ENCODE measurements at regions of chr3 and their contacts with region 1.

Region 1: GRCh38 chr3:73215281-73215680 is 153.8 kb downstream of the EBLN2 start:
- DNase-seq: no peak
- ATAC-seq: no peak
- H3K4me3 ChIP-seq: no peak overlapping the region
- H3K27ac ChIP-seq: no peak overlapping the region
- H3K4me1 ChIP-seq: peaks cover 0 to 5% (median 0%) of the 10 kb centered on the region in 9 donors
- H3K27me3 ChIP-seq: no peaks in the 10 kb centered on the region
- CTCF ChIP-seq: no peak

Region 2: DNA sequence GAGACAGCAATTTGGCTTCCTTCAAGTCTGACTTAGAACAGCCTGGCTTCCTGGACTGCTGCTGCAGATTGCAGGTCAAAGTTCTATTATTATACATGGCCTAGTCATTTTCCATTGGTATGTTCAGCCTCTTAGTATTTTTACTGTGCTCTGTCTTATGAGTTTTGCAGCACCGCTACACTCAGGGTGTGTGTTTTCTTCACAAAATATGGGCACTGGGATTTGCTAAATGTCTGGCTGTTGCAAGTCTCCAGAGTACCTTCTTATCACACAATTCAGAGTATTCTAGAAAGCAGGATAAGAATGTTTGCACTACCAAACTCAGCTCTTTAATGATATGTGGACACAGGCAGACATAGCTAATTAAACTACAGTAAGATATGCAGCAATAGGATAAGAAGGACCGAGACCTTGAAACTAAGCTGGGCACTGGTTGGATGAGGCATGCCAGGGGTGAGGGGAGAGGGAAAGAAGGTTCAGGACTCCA is 612.5 kb after region 1 on chr3:
- intact Hi-C with region 1: no loop called
- DNase-seq: peak in 1 of 2 donors; percentile 15
- ATAC-seq: peak; percentile 75 to 92 (median 88)
- H3K4me3 ChIP-seq: no peak overlapping the region
- H3K27ac ChIP-seq: peak overlapping the region; percentile 46 to 84 (median 74)
- H3K4me1 ChIP-seq: peaks cover 9 to 29% (median 18%) of the 10 kb centered on the region in 9 donors
- H3K27me3 ChIP-seq: no peaks in the 10 kb centered on the region
- CTCF ChIP-seq: no peak

Region 3: GRCh38 chr3:74992898-74993297 is 1777.6 kb after region 1 on chr3:
- intact Hi-C with region 1: loop called in 1 of 10 experiments (anchors 5 kb)
- DNase-seq: no peak
- ATAC-seq: no peak
- H3K4me3 ChIP-seq: no peak overlapping the region
- H3K27ac ChIP-seq: no peak overlapping the region
- H3K4me1 ChIP-seq: no peaks in the 10 kb centered on the region
- H3K27me3 ChIP-seq: no peaks in the 10 kb centered on the region
- CTCF ChIP-seq: no peak